ENCODE measurements at regions of chr2 and their contacts with region 1.

Region 1: GRCh38 chr2:114949228-114949804 is 506.9 kb downstream of the DPP10 start:
- DNase-seq: no peak
- H3K4me3 ChIP-seq: no peak overlapping the region
- H3K27ac ChIP-seq: no peak overlapping the region
- H3K4me1 ChIP-seq: no peaks in the 10 kb centered on the region
- H3K27me3 ChIP-seq: no peaks in the 10 kb centered on the region
- CTCF ChIP-seq: no peak
- POLR2A ChIP-seq: no peak

Region 2: GRCh38 chr2:116378786-116379185 is 1429.5 kb after region 1 on chr2:
- intact Hi-C with region 1: loop called (anchors 5 kb)
- DNase-seq: no peak
- H3K4me3 ChIP-seq: no peak overlapping the region
- H3K27ac ChIP-seq: no peak overlapping the region
- H3K4me1 ChIP-seq: no peaks in the 10 kb centered on the region
- H3K27me3 ChIP-seq: no peaks in the 10 kb centered on the region
- CTCF ChIP-seq: no peak
- POLR2A ChIP-seq: no peak

Measured in breast epithelium (tissue), 4 donors.